Activated CD8-positive, alpha-beta T cell treated with anti-CD3 and anti-CD28 coated beads for 36 hours (primary cell): ENCODE measurements at regions of chr16 and their contacts with region 1.

Region 1: GRCh38 chr16:30429678-30430427 is at the start of gene DCTPP1:
- DNase-seq: peak; percentile 98
- ATAC-seq: peak; percentile 97
- H3K4me3 Mint-ChIP-seq: no peak within 1 kb of the TSS
- H3K27ac Mint-ChIP-seq: no peak within 1 kb of the TSS
- H3K4me1 Mint-ChIP-seq: peaks cover 34% of the 10 kb centered on the region
- H3K27me3 Mint-ChIP-seq: no peaks in the 10 kb centered on the region
- CTCF ChIP-seq: peak; percentile 69
- total RNA-seq, gene DCTPP1: 98.4 to 105 TPM

Region 2: GRCh38 chr16:30445408-30446202 is 15.8 kb after region 1 on chr16 and contains the start of gene SEPHS2:
- CTCF ChIA-PET with region 1: interaction called, 84 read pairs
- POLR2A ChIA-PET with region 1: interaction called, 10 read pairs
- intact Hi-C with region 1: no loop called
- DNase-seq: peak; percentile 100
- ATAC-seq: peak; percentile 97
- H3K4me3 Mint-ChIP-seq: peak within 1 kb of the TSS; percentile 93
- H3K27ac Mint-ChIP-seq: peak within 1 kb of the TSS; percentile 91
- H3K4me1 Mint-ChIP-seq: peaks cover 39% of the 10 kb centered on the region
- H3K27me3 Mint-ChIP-seq: no peaks in the 10 kb centered on the region
- CTCF ChIP-seq: peak; percentile 23
- total RNA-seq, gene SEPHS2: 51.8 to 54.0 TPM

Region 3: GRCh38 chr16:30472328-30472942 is 42.6 kb after region 1 on chr16 and contains the start of gene ITGAL:
- CTCF ChIA-PET with region 1: interaction called, 31 read pairs
- POLR2A ChIA-PET with region 1: interaction called, 21 read pairs
- intact Hi-C with region 1: loop called (anchors 5 kb)
- DNase-seq: peak; percentile 94
- ATAC-seq: peak; percentile 69
- H3K4me3 Mint-ChIP-seq: peak within 1 kb of the TSS; percentile 100
- H3K27ac Mint-ChIP-seq: peak within 1 kb of the TSS; percentile 96
- H3K4me1 Mint-ChIP-seq: peaks cover 54% of the 10 kb centered on the region
- H3K27me3 Mint-ChIP-seq: no peaks in the 10 kb centered on the region
- CTCF ChIP-seq: no peak
- total RNA-seq, gene ITGAL: 274 to 285 TPM

Region 4: DNA sequence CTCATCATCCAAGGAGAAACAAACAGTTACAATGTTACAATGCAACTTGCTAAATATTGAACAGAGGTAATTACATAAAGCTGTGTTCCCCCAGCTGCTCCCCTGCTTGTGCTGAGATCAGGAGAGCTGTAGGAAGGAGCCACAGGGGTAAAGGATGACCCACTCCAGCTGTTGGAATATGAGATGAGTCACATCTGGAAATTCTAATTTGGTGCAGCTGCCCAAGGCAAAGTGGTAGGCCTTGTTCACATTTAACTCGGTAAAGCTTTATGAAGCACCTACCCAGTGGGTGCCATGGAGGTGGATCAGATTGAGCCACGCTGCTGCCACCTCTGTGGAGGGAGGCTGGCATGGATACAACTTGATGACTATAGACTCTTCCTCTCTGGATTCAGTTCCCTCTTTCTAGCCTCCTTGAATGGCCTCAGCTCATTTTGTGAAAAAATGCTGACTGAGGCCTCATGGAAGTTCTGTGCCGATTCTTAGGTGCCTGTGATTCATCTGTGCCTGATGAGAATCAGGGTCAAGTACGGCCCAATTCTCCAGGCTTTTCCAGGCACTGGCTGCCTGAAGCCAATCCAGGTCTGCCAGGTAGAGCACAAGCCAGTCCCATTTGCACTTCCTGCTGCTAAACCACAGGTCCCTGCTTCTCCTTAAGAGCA is 172.9 kb after region 1 on chr16:
- CTCF ChIA-PET with region 1: interaction called, 39 read pairs
- POLR2A ChIA-PET with region 1: interaction called, 6 read pairs
- intact Hi-C with region 1: no loop called
- DNase-seq: no peak
- ATAC-seq: no peak
- H3K4me3 Mint-ChIP-seq: no peak overlapping the region
- H3K27ac Mint-ChIP-seq: no peak overlapping the region
- H3K4me1 Mint-ChIP-seq: peaks cover 9% of the 10 kb centered on the region
- H3K27me3 Mint-ChIP-seq: no peaks in the 10 kb centered on the region
- CTCF ChIP-seq: no peak

Region 5: DNA sequence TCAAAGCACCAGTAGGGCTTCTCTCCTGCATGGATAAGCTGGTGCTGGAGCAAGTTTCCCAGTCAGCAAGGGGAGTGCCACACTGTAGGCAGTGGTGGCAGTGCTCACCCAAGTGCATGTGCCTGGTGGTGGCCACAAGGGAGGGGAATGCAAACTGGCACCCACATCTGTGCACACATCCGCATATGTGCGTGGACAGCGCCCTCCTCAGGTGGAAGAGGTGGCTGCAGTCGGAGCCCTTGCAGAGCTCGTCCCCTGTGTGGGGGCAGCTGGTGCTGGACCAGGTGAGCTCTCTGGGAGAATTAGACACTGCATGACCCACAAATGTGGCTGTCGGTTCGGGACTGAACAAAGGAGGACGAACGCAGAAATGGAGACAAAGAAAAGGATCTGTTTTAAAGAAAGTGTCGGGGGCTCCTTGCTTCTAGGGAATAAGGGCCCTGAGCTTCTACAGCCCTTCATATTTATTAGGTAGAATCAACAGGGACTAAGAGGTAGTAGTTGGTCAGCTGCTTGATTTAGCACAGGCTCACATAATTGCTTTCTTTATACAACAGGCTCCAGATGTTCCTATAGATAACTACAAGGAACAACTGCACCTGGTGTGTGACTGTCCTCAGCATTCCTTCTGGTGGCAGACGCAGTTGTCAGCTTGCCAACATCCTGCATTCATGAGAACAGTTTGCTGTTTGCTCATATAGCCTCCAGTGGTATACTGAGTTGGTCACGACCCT is 185.7 kb after region 1 on chr16:
- CTCF ChIA-PET with region 1: interaction called, 25 read pairs
- POLR2A ChIA-PET with region 1: interaction called, 10 read pairs
- intact Hi-C with region 1: no loop called
- DNase-seq: peak; percentile 94
- ATAC-seq: peak; percentile 90
- H3K4me3 Mint-ChIP-seq: no peak overlapping the region
- H3K27ac Mint-ChIP-seq: no peak overlapping the region
- H3K4me1 Mint-ChIP-seq: peaks cover 1% of the 10 kb centered on the region
- H3K27me3 Mint-ChIP-seq: no peaks in the 10 kb centered on the region
- CTCF ChIP-seq: peak; percentile 90